ENCODE measurements at regions of chr12 and their contacts with region 1.

Region 1: GRCh38 chr12:49644620-49644994 is 21.2 kb downstream of the PRPF40B start:
- DNase-seq: peak in 1 of 2 experiments; percentile 83
- H3K4me3 ChIP-seq: no peak overlapping the region
- H3K27ac ChIP-seq: no peak overlapping the region
- H3K4me1 ChIP-seq: no peaks in the 10 kb centered on the region
- H3K27me3 ChIP-seq: no peaks in the 10 kb centered on the region
- CTCF ChIP-seq: peak; percentile 87 to 93 (median 89)
- EP300 ChIP-seq: no peak
- POLR2A ChIP-seq: no peak
- RAD21 ChIP-seq: peak; percentile 97

Region 2: DNA sequence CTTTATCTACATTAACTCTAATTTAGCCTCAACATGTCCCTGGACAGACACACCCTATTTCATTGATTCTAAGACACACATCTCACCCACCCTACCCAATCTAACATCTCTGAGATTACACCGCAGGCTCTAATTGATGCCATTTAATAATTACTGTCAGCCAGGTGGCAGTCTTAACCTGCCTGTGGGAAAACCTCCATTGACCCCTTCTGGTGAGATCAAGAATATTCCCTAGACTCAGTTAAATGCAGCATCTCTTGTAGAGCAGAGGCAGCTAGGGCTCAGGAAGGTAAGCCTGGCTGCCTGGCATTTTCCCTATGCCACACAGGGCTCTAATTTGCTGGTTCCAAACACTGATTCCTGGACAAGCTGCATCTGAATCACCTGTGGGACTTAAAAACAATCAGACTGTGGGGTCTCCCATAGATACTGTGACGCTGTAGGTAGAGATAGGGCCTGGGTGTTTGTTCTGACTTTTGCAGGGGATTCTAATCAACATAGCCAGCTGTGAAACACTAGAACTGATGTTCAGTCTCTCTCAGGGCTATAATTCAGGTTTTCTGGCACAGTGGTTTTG is 91.0 kb before region 1 on chr12:
- CTCF ChIA-PET with region 1: no interaction called
- POLR2A ChIA-PET with region 1: no interaction called
- DNase-seq: no peak
- H3K4me3 ChIP-seq: no peak overlapping the region
- H3K27ac ChIP-seq: no peak overlapping the region
- H3K4me1 ChIP-seq: peaks cover 0 to 12% (median 8%) of the 10 kb centered on the region in 4 experiments; a peak in 6 of 7 replicates
- H3K27me3 ChIP-seq: peaks cover 4 to 28% (median 20%) of the 10 kb centered on the region in 4 experiments
- CTCF ChIP-seq: peak in 2 of 3 experiments; percentile 82 to 99; a peak in 3 of 4 replicates
- EP300 ChIP-seq: no peak
- POLR2A ChIP-seq: no peak
- RAD21 ChIP-seq: peak; percentile 75 to 85

Region 3: GRCh38 chr12:49623142-49623904 is 21.3 kb before region 1 on chr12 and contains the start of gene PRPF40B:
- CTCF ChIA-PET with region 1: interaction called, 58 read pairs
- POLR2A ChIA-PET with region 1: interaction called, 9 read pairs
- DNase-seq: peak; percentile 78 to 95
- H3K4me3 ChIP-seq: peak within 1 kb of the TSS; percentile 50 to 73 (median 66)
- H3K27ac ChIP-seq: peak within 1 kb of the TSS; percentile 56; the same call in 1 of the 2 replicates
- H3K4me1 ChIP-seq: peaks cover 0 to 7% (median 3%) of the 10 kb centered on the region in 4 experiments; a peak in 6 of 7 replicates
- H3K27me3 ChIP-seq: no peaks in the 10 kb centered on the region
- CTCF ChIP-seq: peak; percentile 47 to 56 (median 54)
- EP300 ChIP-seq: 0 out of 3 replicates have a peak, but pooled peaks of 1 of the 2 experiments have one; percentile 7
- POLR2A ChIP-seq: no peak; a peak in 1 of 3 replicates
- RAD21 ChIP-seq: peak; percentile 27 to 47; a peak in 3 of 4 replicates
- total RNA-seq, gene PRPF40B: 24.4 and 26.8 TPM in 2 replicates

Region 4: DNA sequence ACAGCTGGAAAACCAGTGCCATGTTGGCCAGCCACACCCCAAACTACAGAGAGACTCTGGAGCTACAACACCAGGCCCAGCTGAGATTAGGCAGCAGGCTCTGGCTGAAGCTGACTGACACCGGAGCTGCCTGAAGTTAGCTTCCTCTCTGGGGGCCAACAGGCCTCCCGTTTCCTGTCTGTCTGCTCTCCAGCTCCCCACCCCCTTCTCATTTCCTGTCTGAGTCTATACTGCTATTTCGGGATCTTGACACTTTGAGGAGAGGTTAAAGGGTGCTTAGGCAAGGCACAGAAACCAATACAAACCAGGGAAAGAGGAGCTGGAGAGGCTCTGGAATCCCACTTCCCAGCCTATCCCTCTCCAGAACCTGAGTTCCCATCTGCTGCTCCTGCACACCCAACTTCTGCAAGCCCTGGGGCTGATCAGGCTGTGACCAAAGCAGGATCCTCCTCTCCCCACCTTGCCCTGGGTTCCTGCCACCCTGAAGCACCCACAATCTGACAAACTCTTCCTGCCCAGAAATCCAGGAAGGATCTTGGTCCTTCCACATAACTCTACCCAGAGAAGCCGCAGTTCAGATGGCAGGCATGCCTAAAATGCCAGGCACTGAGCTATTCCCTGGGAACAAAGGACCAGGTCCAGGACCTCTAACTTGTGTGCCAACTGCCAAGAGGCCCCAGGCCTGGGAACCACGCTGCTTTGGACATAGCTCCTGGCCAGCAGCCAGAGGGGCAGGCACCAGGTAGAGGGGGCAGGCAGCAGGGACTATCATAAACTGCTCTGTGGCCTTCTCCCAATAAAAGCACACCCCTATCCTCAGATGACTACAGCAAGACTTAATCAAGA is 18.6 kb after region 1 on chr12:
- CTCF ChIA-PET with region 1: interaction called, 41 read pairs
- POLR2A ChIA-PET with region 1: interaction called, 5 read pairs
- DNase-seq: peak in 1 of 2 experiments; percentile 21
- H3K4me3 ChIP-seq: no peak overlapping the region
- H3K27ac ChIP-seq: no peak overlapping the region
- H3K4me1 ChIP-seq: peaks cover 3 to 6% (median 4%) of the 10 kb centered on the region in 4 experiments; a peak in 4 of 7 replicates
- H3K27me3 ChIP-seq: no peaks in the 10 kb centered on the region
- CTCF ChIP-seq: no peak
- EP300 ChIP-seq: no peak
- POLR2A ChIP-seq: no peak
- RAD21 ChIP-seq: no peak

Region 5: GRCh38 chr12:49673446-49674317 is 29.1 kb after region 1 on chr12:
- CTCF ChIA-PET with region 1: interaction called, 24 read pairs
- POLR2A ChIA-PET with region 1: interaction called, 4 read pairs
- DNase-seq: peak in 1 of 2 experiments; percentile 61
- H3K4me3 ChIP-seq: no peak overlapping the region
- H3K27ac ChIP-seq: 0 out of 2 replicates have a peak overlapping the region, but pooled peaks have one; percentile 6
- H3K4me1 ChIP-seq: peaks cover 3 to 7% (median 6%) of the 10 kb centered on the region in 4 experiments
- H3K27me3 ChIP-seq: no peaks in the 10 kb centered on the region
- CTCF ChIP-seq: peak in 1 of 3 experiments; percentile 9; a peak in 1 of 4 replicates
- EP300 ChIP-seq: no peak
- POLR2A ChIP-seq: no peak
- RAD21 ChIP-seq: 0 out of 4 replicates have a peak, but pooled peaks of 1 of the 2 experiments have one; percentile 6

Region 6: DNA sequence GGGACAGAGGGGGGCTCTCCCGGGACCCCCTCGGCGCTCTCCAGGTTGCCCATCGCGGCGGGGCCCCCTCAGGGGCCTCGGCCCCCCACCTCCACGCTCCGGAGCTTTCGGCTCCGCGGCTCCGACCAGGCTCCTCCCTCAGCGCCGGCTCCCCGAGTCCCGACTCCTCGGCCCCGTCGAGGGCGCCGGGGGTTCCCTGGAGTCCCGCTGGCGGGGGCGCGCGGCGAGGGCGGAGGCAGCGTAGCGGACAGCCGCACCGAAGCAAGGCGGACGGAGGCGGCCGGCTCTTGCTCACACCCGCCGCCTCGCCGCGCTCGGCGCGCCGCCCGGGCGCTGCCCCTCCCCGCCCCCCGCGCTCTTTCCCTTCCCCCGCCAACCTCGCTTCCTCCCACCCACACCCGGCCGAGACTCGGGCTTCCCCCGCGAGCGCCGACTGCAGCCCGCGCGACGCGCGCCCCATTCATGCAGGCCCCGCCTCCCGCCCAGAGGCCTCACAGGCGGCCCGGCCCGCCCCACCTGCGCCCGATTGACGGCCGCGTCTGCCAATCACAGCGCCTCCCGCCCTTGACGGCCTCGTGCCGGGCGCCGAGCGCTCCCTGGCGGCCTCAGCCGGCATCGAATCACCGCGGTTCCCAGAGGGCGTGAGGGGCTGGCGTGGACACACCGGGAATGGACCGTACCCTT is 62.7 kb after region 1 on chr12 and contains the start of gene FMNL3:
- CTCF ChIA-PET with region 1: interaction called, 222 read pairs
- POLR2A ChIA-PET with region 1: interaction called, 19 read pairs
- DNase-seq: peak; percentile 77 to 99
- H3K4me3 ChIP-seq: peak within 1 kb of the TSS; percentile 53 to 82 (median 75)
- H3K27ac ChIP-seq: no peak within 1 kb of the TSS
- H3K4me1 ChIP-seq: peaks cover 3 to 27% (median 8%) of the 10 kb centered on the region in 4 experiments
- H3K27me3 ChIP-seq: peaks cover 1 to 9% (median 6%) of the 10 kb centered on the region in 4 experiments
- CTCF ChIP-seq: peak; percentile 87 to 96 (median 88)
- EP300 ChIP-seq: no peak
- POLR2A ChIP-seq: peak in 1 of 2 experiments; percentile 45; a peak in 2 of 3 replicates
- RAD21 ChIP-seq: peak; percentile 92 to 98
- total RNA-seq, gene FMNL3: 27.6 and 29.0 TPM in 2 replicates

Region 7: DNA sequence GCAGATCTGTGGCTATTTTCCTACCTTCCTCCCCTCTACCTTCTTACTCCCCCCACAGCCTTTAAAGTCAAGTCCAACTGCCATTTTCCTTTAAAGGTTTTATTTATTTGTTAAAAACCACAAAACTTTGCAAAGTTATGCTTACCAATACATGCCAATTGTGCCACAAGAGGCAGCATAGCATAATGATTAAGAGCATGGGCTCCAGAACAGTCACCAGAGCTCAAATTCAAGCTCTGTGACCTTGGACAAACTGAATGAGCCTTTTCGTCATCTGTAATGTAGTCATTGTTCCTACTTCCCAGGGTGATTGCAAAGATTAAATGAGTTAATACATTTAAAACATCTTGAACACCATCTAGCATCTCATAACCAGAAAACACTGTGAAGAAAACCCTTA is 75.6 kb after region 1 on chr12:
- CTCF ChIA-PET with region 1: interaction called, 20 read pairs
- POLR2A ChIA-PET with region 1: interaction called, 4 read pairs
- DNase-seq: no peak
- H3K4me3 ChIP-seq: no peak overlapping the region
- H3K27ac ChIP-seq: no peak overlapping the region
- H3K4me1 ChIP-seq: no peaks in the 10 kb centered on the region
- H3K27me3 ChIP-seq: no peaks in the 10 kb centered on the region
- CTCF ChIP-seq: peak in 1 of 3 experiments; percentile 10; a peak in 2 of 4 replicates
- EP300 ChIP-seq: no peak
- POLR2A ChIP-seq: no peak
- RAD21 ChIP-seq: peak in 1 of 2 experiments; percentile 9; a peak in 1 of 4 replicates

Region 8: GRCh38 chr12:49763006-49763591 is 118.5 kb after region 1 on chr12:
- CTCF ChIA-PET with region 1: interaction called, 19 read pairs
- POLR2A ChIA-PET with region 1: interaction called, 3 read pairs
- DNase-seq: peak; percentile 38 to 92
- H3K4me3 ChIP-seq: no peak overlapping the region
- H3K27ac ChIP-seq: no peak overlapping the region
- H3K4me1 ChIP-seq: peaks cover 0 to 4% (median 0%) of the 10 kb centered on the region in 4 experiments; a peak in 1 of 7 replicates
- H3K27me3 ChIP-seq: no peaks in the 10 kb centered on the region
- CTCF ChIP-seq: peak; percentile 83 to 89 (median 87)
- EP300 ChIP-seq: no peak
- POLR2A ChIP-seq: no peak
- RAD21 ChIP-seq: peak; percentile 50 to 54; a peak in 3 of 4 replicates